H1 (cell line): ENCODE measurements at regions of chr12 and their contacts with region 1.

Region 1: DNA sequence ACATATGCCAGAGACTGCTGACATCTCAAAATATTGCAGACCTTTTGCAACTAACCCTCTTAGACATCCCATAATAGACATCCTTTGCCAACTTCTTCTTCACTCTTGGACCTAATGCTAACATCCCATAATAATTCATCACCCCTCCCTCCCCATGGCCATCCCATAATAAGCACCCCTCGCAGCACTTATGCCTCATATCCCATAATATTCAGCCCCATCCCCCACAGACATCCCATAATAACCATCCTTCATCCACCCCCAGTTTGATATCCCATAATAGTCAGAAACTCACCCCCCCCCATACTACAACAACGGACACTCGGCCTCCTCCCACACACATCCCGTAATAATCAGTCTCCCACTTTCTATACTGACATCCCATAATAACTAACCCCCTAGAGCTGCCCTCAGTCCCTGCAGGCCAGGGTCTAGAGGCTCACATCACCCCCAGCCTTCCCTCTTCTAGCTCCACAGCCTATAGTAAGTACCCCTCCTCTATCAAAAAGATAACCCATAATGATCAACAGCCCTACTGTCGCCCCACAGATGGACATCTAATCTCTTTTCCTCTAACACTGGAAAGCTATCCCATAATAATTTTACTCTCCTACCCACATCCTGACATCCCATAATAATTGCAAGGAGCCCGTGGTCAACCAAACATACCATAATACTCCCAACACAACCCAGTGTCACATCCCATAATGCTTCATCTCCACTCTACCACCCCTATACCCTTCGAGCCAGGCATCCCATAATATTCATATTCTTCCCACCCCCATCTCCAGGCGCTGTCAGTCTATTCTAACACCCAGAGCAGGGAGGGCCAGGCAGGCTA is 792 bp upstream of the CHD4 start:
- DNase-seq: no peak
- H3K4me3 ChIP-seq: peak overlapping the region in 1 of 4 experiments; percentile 17; a peak in 3 of 8 replicates
- H3K27ac ChIP-seq: no peak overlapping the region
- H3K4me1 ChIP-seq: peaks cover 17 to 34% (median 23%) of the 10 kb centered on the region in 4 experiments
- H3K27me3 ChIP-seq: no peaks in the 10 kb centered on the region
- CTCF ChIP-seq: no peak
- EP300 ChIP-seq: no peak
- POLR2A ChIP-seq: no peak
- RAD21 ChIP-seq: no peak

Region 2: DNA sequence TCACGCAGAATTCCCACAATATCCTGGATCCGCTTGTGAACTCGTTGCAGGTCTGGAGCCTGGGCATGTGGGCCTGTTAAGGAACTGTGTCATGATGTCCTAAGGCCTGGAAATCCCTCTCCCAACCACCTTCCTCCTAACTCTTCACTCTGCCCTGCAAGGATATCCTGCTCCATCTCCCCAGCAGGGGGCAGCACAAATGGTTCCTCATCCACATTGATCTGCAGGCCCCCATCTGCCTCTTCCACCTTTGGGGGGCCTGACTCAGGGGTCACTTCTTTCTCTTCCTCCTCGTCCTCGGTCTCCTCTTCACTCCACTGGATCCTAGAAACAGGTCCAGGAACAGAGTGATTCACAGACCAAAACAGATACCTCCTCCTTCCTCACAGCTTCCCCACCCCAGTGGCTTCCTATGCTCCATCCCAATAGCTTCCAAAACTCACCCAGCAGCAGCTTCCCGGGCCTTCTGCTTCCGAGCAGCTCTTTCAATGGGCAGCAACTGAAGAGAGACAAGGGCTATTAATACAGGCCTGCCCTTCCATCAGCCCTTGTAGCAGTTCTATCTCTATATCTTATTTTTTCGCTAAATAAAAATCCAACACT is 44.4 kb before region 1 on chr12:
- CTCF ChIA-PET with region 1: interaction called, 15 read pairs
- POLR2A ChIA-PET with region 1: interaction called, 14 read pairs
- DNase-seq: peak in 1 of 2 experiments; percentile 89
- H3K4me3 ChIP-seq: no peak overlapping the region
- H3K27ac ChIP-seq: no peak overlapping the region
- H3K4me1 ChIP-seq: peaks cover 0 to 5% (median 4%) of the 10 kb centered on the region in 4 experiments; a peak in 4 of 7 replicates
- H3K27me3 ChIP-seq: no peaks in the 10 kb centered on the region
- CTCF ChIP-seq: peak; percentile 62 to 85 (median 80)
- EP300 ChIP-seq: no peak
- POLR2A ChIP-seq: no peak
- RAD21 ChIP-seq: peak in 1 of 2 experiments; percentile 5; a peak in 1 of 4 replicates

Region 3: DNA sequence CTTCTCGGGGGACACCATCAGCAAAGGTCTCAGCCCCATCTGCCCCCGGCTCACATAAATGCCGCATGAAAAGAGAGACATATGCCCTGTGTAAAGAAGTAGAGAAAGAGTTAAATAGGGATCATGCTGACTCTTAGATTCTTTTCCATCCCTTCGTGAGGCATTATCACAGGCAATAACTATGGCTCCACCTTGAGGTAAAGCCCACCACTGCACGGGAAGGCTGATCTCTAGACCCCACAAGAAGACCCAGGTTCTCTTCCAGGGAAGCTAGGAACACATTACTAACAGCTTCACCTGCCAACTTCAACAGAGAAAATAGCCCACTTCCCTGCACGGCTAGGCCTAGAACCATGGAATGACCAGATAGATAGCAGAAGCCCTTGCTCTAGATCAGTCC is 25.8 kb before region 1 on chr12:
- CTCF ChIA-PET with region 1: interaction called, 6 read pairs
- POLR2A ChIA-PET with region 1: interaction called, 225 read pairs
- DNase-seq: no peak
- H3K4me3 ChIP-seq: no peak overlapping the region
- H3K27ac ChIP-seq: no peak overlapping the region; the same call in 1 of the 2 replicates
- H3K4me1 ChIP-seq: no peaks in the 10 kb centered on the region
- H3K27me3 ChIP-seq: no peaks in the 10 kb centered on the region
- CTCF ChIP-seq: peak in 2 of 3 experiments; percentile 37 to 55; a peak in 3 of 4 replicates
- EP300 ChIP-seq: no peak
- POLR2A ChIP-seq: no peak
- RAD21 ChIP-seq: peak in 1 of 2 experiments; percentile 13; a peak in 1 of 4 replicates

Region 4: DNA sequence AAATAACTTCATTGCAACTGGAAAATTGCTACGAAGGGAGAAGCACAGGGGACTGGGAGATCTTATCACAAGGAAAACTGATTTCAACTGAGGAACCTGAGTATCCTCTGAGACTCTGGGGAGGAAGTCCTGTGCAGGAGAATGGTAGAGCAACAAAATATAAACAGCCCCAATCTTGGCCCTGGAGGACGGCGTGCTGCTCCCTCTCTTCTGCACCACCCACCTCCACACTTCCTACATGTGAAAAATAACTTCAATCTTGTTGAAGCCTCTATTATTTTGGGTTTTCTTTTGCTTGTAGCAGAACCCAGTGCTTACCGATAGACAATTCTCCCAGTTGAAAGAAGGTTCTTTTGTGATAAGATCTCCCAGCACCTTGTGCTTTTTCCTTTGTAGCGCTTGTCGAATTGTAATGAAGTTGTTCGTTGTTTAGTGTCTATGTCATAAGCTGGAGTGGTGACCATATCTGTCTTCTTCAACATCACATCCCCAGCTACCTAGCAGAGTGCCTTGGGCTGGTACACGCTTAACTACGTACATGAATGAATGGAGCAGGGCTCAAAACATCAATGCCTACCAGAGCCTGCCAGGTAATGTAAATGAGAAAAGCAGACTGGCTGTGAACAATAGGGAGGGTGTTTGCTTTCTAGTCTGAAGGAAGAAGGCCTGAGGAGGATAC is 178.6 kb after region 1 on chr12:
- CTCF ChIA-PET with region 1: no interaction called
- POLR2A ChIA-PET with region 1: no interaction called
- DNase-seq: no peak
- H3K4me3 ChIP-seq: no peak overlapping the region
- H3K27ac ChIP-seq: no peak overlapping the region
- H3K4me1 ChIP-seq: peaks cover 4 to 10% (median 6%) of the 10 kb centered on the region in 4 experiments; a peak in 6 of 7 replicates
- H3K27me3 ChIP-seq: no peaks in the 10 kb centered on the region
- CTCF ChIP-seq: no peak
- EP300 ChIP-seq: no peak
- POLR2A ChIP-seq: no peak
- RAD21 ChIP-seq: no peak